Prostate gland (tissue), 2 donors: ENCODE measurements at regions of chr9 and their contacts with region 1.

Region 1: GRCh38 chr9:115068031-115068430 is 49.9 kb downstream of the TNC start:
- DNase-seq: no peak
- H3K4me3 ChIP-seq: no peak overlapping the region
- H3K27ac ChIP-seq: no peak overlapping the region
- H3K4me1 ChIP-seq: no peaks in the 10 kb centered on the region
- H3K27me3 ChIP-seq: no peaks in the 10 kb centered on the region
- CTCF ChIP-seq: no peak
- POLR2A ChIP-seq: no peak

Region 2: DNA sequence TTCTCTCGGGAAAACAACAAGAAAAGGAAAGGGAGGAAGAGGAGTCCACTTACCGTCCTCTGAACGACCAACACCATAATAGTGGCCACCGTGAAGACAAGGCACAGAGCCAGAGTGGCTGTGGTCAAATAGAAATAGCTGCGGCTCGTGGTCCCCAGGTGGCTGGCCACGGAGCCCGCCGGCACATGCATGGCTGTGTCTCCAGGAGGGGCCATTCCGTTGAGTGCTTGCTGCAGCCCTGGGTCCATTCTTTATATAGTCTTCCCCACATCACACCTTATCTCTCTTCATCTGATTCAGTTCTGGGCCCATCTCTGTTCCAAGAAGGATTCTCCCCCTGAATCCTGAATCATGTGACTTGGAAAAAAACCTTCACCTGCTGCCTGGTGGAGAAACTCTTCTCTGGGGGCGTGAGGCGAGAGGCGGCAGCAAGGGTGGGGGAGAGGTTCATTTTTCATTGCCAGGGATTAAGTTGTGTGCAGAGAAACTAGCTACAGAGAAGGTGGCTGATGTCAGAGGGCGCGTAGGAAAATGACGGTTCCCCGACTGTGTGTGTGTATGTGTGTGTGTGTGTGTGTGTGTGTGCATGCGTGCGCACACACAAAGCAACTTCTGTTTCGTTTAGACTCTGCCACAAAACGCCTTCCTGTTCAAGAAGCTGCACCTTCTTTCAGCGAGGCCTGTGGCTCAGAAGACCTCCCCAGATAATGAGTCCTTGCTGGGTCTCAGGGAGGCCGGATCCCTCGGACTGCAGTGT is 137.8 kb before region 1 on chr9 and contains the start of gene TNFSF8:
- intact Hi-C with region 1: no loop called
- DNase-seq: no peak
- H3K4me3 ChIP-seq: no peak within 1 kb of the TSS
- H3K27ac ChIP-seq: no peak within 1 kb of the TSS
- H3K4me1 ChIP-seq: no peaks in the 10 kb centered on the region
- H3K27me3 ChIP-seq: no peaks in the 10 kb centered on the region
- CTCF ChIP-seq: no peak
- POLR2A ChIP-seq: no peak
- total RNA-seq, gene TNFSF8: 0.32 to 2.4 TPM

Region 3: GRCh38 chr9:115146581-115147021 is 78.6 kb after region 1 on chr9:
- intact Hi-C with region 1: loop called (anchors 2 kb)
- DNase-seq: peak; percentile 6
- H3K4me3 ChIP-seq: no peak overlapping the region
- H3K27ac ChIP-seq: peak overlapping the region; percentile 38 to 41
- H3K4me1 ChIP-seq: no peaks in the 10 kb centered on the region
- H3K27me3 ChIP-seq: no peaks in the 10 kb centered on the region
- CTCF ChIP-seq: no peak
- POLR2A ChIP-seq: no peak